WTC11 (cell line): ENCODE measurements at regions of chr13 and their contacts with region 1.

Region 1: GRCh38 chr13:45047394-45048310 is 58.3 kb downstream of the GPALPP1 start:
- DNase-seq: peak; percentile 78
- ATAC-seq: peak; percentile 90
- H3K4me3 Mint-ChIP-seq: peak overlapping the region; percentile 82
- H3K27ac Mint-ChIP-seq: peak overlapping the region; percentile 58; the same call in 1 of the 2 replicates
- H3K4me1 Mint-ChIP-seq: peaks cover 16% of the 10 kb centered on the region
- H3K27me3 Mint-ChIP-seq: no peaks in the 10 kb centered on the region
- CTCF ChIP-seq: peak; percentile 71

Region 2: DNA sequence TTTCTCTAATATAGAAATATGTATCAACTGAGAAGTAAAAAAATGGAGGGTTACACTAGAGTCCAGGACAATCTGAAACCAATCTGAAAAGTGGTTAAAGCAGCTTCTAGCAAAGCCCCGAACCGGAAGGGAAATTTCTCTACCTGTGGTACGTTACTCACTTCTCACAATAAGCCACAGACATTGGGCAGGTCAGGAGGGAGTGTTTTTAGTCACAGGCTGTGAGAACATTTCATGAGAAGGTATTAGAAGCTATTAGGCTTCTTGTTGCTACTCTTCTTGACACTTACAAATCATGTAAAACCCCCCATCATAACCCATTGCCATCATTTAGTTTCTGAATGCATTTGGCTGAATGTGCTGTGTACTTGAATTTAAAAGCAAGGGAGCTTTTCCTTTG is 179.3 kb before region 1 on chr13:
- CTCF ChIA-PET with region 1: no interaction called
- POLR2A ChIA-PET with region 1: no interaction called
- DNase-seq: no peak
- ATAC-seq: no peak
- H3K4me3 Mint-ChIP-seq: no peak overlapping the region
- H3K27ac Mint-ChIP-seq: no peak overlapping the region
- H3K4me1 Mint-ChIP-seq: no peaks in the 10 kb centered on the region
- H3K27me3 Mint-ChIP-seq: no peaks in the 10 kb centered on the region
- CTCF ChIP-seq: no peak

Region 3: GRCh38 chr13:45102136-45102507 is 54.5 kb after region 1 on chr13:
- CTCF ChIA-PET with region 1: interaction called, 14 read pairs
- POLR2A ChIA-PET with region 1: no interaction called
- DNase-seq: no peak
- ATAC-seq: no peak
- H3K4me3 Mint-ChIP-seq: no peak overlapping the region
- H3K27ac Mint-ChIP-seq: peak overlapping the region; percentile 88
- H3K4me1 Mint-ChIP-seq: peaks cover 33% of the 10 kb centered on the region
- H3K27me3 Mint-ChIP-seq: no peaks in the 10 kb centered on the region
- CTCF ChIP-seq: no peak

Region 4: DNA sequence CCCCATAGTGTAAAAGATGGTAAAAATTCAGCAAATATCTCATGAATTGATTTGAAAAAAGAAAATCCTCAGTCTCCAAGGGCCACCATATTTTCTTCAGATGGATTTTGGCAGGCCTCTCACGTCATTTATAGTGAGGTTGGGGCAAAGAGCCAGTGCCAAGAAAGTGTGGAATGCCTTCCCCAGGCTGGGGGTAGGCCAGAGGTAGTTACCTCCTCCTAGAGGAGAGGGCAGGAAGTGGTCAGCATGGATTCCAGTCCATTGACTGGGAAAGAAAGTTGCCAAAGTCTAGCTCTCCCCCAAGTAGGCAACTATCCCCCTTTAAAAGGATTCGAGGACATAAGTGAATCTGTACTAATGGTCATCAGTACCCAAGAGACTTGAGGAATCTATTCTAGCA is 221.6 kb after region 1 on chr13:
- CTCF ChIA-PET with region 1: interaction called, 13 read pairs
- POLR2A ChIA-PET with region 1: no interaction called
- DNase-seq: no peak
- ATAC-seq: peak; percentile 84
- H3K4me3 Mint-ChIP-seq: no peak overlapping the region
- H3K27ac Mint-ChIP-seq: no peak overlapping the region
- H3K4me1 Mint-ChIP-seq: peaks cover 21% of the 10 kb centered on the region
- H3K27me3 Mint-ChIP-seq: no peaks in the 10 kb centered on the region
- CTCF ChIP-seq: no peak

Region 5: DNA sequence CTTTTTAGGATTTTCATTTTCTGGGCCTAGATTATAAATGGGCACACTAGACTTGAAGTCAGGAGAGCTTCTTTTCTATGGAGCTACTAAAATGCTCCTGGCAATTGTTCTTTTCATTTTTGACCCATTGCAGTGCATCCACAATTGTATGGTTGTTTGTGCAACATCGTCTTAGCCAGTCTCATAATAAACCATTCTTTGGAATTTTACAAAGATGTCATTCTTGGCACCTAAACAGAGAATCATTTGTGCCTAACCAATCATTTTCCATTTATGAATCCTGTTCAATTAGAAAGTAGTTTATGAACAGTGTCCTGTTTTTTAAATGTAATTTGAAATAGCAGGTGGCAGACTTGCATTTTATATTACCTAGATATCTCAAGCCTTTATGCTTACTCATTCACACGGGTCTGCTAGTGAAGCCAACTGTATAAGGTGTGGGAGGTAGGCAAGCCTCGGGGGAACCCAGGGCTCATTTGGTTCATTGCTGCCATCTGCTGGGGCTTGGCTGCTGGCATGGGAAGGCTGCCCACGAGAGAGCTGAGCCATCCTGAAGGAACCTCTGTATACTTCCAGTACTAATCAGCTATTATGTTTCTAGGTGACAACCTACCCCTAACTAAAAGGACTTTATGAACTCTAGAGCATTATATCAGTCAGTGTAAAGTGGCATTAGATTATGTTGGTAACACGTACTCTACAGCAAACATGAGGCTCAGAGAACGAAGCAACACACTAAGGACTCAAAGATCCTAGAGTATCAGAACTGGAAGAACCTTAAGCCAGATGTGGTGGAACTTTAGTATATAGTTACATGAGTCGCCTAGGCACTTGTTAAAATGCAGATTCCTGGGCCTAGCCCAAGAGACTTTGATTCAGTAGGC is 233.3 kb after region 1 on chr13:
- CTCF ChIA-PET with region 1: interaction called, 67 read pairs
- POLR2A ChIA-PET with region 1: no interaction called
- DNase-seq: peak; percentile 71
- ATAC-seq: peak; percentile 99
- H3K4me3 Mint-ChIP-seq: no peak overlapping the region
- H3K27ac Mint-ChIP-seq: peak overlapping the region; percentile 18; the same call in 1 of the 2 replicates
- H3K4me1 Mint-ChIP-seq: peaks cover 6% of the 10 kb centered on the region
- H3K27me3 Mint-ChIP-seq: no peaks in the 10 kb centered on the region
- CTCF ChIP-seq: no peak

Region 6: GRCh38 chr13:45310341-45311125 is 262.9 kb after region 1 on chr13:
- CTCF ChIA-PET with region 1: interaction called, 28 read pairs
- POLR2A ChIA-PET with region 1: interaction called, 3 read pairs
- DNase-seq: no peak
- ATAC-seq: no peak
- H3K4me3 Mint-ChIP-seq: peak overlapping the region; percentile 86
- H3K27ac Mint-ChIP-seq: peak overlapping the region; percentile 73; the same call in 1 of the 2 replicates
- H3K4me1 Mint-ChIP-seq: peaks cover 26% of the 10 kb centered on the region
- H3K27me3 Mint-ChIP-seq: no peaks in the 10 kb centered on the region
- CTCF ChIP-seq: no peak

Region 7: DNA sequence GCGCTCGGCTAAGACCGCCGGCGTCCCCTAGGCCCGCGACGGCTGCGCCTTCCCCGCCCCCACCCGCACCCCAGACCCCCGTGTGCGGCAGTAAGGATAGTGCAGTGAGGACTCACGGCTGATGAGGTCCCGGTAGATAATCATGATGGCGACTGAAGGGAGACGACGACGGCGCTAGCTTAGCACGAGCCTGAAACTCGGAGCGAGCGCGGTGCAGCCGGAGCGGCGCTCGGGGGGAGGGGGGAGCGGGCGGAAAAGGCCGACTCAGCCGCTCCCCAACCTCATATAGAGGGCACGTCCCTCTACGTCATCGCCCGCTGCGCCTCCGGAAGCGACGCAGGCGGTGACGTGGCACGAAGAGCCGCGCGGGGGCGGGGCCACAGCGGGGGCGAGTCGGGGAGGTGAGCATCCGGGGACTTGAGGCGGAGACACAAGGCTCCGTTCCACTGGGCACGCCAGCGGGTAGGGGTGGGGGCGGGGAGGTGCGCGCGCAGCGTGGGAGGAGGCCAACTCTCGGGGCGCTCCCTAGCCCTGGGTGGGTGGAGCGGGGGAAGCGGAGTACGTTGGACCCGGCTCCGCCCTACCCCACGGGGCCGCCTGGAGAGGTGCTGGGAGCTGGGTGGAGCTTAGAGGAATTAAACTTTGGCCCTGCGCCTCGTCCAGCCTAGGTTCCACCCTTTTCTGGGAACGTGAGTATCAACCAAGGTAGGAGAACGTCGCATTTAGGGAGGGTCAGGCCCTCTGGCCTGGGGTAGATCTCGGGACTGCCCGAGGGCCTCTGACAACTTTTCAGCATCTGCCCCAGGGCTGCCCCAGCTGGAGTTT is 293.5 kb after region 1 on chr13 and contains the start of gene TPT1:
- CTCF ChIA-PET with region 1: interaction called, 10 read pairs
- POLR2A ChIA-PET with region 1: no interaction called
- DNase-seq: peak; percentile 98
- ATAC-seq: peak; percentile 96
- H3K4me3 Mint-ChIP-seq: peak within 1 kb of the TSS; percentile 97
- H3K27ac Mint-ChIP-seq: peak within 1 kb of the TSS; percentile 100
- H3K4me1 Mint-ChIP-seq: peaks cover 38% of the 10 kb centered on the region
- H3K27me3 Mint-ChIP-seq: no peaks in the 10 kb centered on the region
- CTCF ChIP-seq: no peak
- total RNA-seq, gene TPT1: 1,861 to 2,091 TPM (median 2,076 TPM) in 3 replicates